HCT116 (cell line): ENCODE measurements at regions of chr20 and their contacts with region 1.

Region 1: GRCh38 chr20:35604449-35604747 is 11.2 kb upstream of the SPAG4 start:
- DNase-seq: no peak
- ATAC-seq: peak; percentile 73
- H3K4me3 ChIP-seq: no peak overlapping the region
- H3K27ac ChIP-seq: no peak overlapping the region
- H3K4me1 ChIP-seq: peaks cover 24 to 34% of the 10 kb centered on the region in 2 experiments
- H3K27me3 ChIP-seq: no peaks in the 10 kb centered on the region
- CTCF ChIP-seq: peak in 2 of 3 experiments; percentile 62 to 70; a peak in 4 of 6 replicates
- POLR2A ChIP-seq: no peak
- RAD21 ChIP-seq: peak; percentile 41

Region 2: DNA sequence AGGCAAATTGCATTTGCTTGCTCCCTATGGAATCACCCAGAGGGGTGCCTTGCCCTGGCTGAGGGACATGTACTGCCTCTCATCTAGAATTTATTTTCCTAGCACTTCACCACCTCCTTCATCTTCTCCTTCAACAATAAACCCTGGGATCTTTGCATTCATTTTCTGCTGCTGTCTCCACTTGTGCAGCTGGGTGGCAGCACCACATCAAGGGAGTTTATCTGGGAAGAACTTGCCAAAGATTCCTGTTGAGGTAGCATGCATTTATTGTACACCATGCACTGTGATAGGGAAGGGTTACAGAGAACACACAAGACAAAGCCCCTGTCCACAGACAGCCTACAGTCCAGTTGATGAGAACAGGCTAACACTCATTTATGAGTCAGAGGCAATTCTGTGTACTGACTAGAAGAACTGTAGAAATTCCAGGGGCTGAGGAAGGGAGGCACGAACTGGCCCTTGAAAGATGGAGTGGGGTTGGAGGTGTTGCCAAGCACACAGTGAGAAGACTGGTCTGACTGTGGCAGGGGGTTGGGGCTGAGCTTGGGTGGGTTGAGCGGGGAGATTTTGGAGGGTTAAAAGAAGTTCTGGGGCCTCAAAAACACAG is 92.5 kb before region 1 on chr20:
- CTCF ChIA-PET with region 1: no interaction called
- POLR2A ChIA-PET with region 1: no interaction called
- RAD21 ChIA-PET with region 1: no interaction called
- intact Hi-C with region 1: loop called (anchors 2 kb)
- DNase-seq: no peak
- ATAC-seq: peak; percentile 35; the same call in 1 of the 2 replicates
- H3K4me3 ChIP-seq: no peak overlapping the region
- H3K27ac ChIP-seq: no peak overlapping the region
- H3K4me1 ChIP-seq: peaks cover 13 to 17% of the 10 kb centered on the region in 2 experiments
- H3K27me3 ChIP-seq: no peaks in the 10 kb centered on the region
- CTCF ChIP-seq: peak; percentile 67 to 85 (median 73); a peak in 5 of 6 replicates
- POLR2A ChIP-seq: no peak
- RAD21 ChIP-seq: peak; percentile 91

Region 3: GRCh38 chr20:35547329-35547728 is 57.1 kb before region 1 on chr20:
- CTCF ChIA-PET with region 1: no interaction called
- POLR2A ChIA-PET with region 1: no interaction called
- RAD21 ChIA-PET with region 1: interaction called in 1 of 2 experiments, 3 read pairs
- intact Hi-C with region 1: loop called (anchors 5 kb)
- DNase-seq: no peak
- ATAC-seq: no peak
- H3K4me3 ChIP-seq: no peak overlapping the region
- H3K27ac ChIP-seq: no peak overlapping the region
- H3K4me1 ChIP-seq: peaks cover 5 to 15% of the 10 kb centered on the region in 2 experiments; a peak in 3 of 4 replicates
- H3K27me3 ChIP-seq: no peaks in the 10 kb centered on the region
- CTCF ChIP-seq: no peak
- POLR2A ChIP-seq: no peak
- RAD21 ChIP-seq: no peak

Region 4: DNA sequence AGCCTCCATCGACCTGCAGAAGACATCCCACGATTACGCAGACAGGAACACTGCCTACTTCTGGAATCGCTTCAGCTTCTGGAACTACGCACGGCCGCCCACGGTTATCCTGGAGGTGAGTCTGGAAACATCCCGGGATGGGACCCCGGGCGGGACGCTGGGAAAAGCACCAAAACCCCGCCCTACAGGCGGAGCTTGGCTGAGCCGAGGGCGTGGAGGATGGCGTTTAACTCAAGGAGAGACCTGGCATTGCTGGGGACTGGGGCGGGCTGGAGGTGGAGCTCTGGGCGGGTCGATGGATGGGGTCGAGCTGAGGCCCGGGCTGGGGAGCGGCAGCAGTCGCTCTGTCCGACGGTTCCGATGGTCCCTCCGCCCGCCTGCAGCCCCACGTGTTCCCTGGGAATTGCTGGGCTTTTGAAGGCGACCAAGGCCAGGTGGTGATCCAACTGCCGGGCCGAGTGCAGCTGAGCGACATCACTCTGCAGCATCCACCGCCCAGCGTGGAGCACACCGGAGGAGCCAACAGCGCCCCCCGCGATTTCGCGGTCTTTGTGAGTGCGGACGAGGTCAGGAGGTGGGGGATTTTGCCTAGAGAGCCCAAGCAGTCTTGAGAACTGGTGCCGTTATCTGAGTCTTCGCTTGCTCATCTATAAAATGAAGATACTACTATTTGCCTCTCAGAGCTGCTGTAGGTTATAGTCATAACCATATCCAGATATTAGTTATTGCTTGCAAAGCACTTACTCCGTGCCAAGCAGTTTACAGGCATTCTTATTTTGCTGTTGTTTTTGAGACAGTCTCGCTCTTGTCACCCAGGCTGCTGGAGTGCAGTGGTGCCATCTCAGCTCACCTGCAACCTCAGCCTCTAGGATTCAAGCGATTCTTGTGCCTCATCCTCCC is 15.0 kb after region 1 on chr20:
- CTCF ChIA-PET with region 1: interaction called, 10 read pairs
- POLR2A ChIA-PET with region 1: interaction called, 4 read pairs
- RAD21 ChIA-PET with region 1: no interaction called
- intact Hi-C with region 1: no loop called
- DNase-seq: peak; percentile 76
- ATAC-seq: peak; percentile 71
- H3K4me3 ChIP-seq: peak overlapping the region; percentile 63 to 70
- H3K27ac ChIP-seq: peak overlapping the region; percentile 23
- H3K4me1 ChIP-seq: peaks cover 19 to 42% of the 10 kb centered on the region in 2 experiments
- H3K27me3 ChIP-seq: no peaks in the 10 kb centered on the region
- CTCF ChIP-seq: peak in 2 of 3 experiments; percentile 67; a peak in 4 of 6 replicates
- POLR2A ChIP-seq: no peak
- RAD21 ChIP-seq: no peak

Region 5: GRCh38 chr20:35907017-35907701 is 302.8 kb after region 1 on chr20:
- CTCF ChIA-PET with region 1: no interaction called
- POLR2A ChIA-PET with region 1: no interaction called
- RAD21 ChIA-PET with region 1: no interaction called
- intact Hi-C with region 1: no loop called
- DNase-seq: no peak
- ATAC-seq: no peak
- H3K4me3 ChIP-seq: no peak overlapping the region
- H3K27ac ChIP-seq: no peak overlapping the region
- H3K4me1 ChIP-seq: peaks cover 0 to 6% of the 10 kb centered on the region in 2 experiments; a peak in 2 of 4 replicates
- H3K27me3 ChIP-seq: no peaks in the 10 kb centered on the region
- CTCF ChIP-seq: no peak
- POLR2A ChIP-seq: no peak
- RAD21 ChIP-seq: no peak

Region 6: GRCh38 chr20:36344517-36345136 is 740.2 kb after region 1 on chr20:
- CTCF ChIA-PET with region 1: no interaction called
- POLR2A ChIA-PET with region 1: no interaction called
- RAD21 ChIA-PET with region 1: no interaction called
- intact Hi-C with region 1: no loop called
- DNase-seq: peak; percentile 13
- ATAC-seq: peak; percentile 63; the same call in 1 of the 2 replicates
- H3K4me3 ChIP-seq: no peak overlapping the region
- H3K27ac ChIP-seq: no peak overlapping the region
- H3K4me1 ChIP-seq: no peaks in the 10 kb centered on the region
- H3K27me3 ChIP-seq: no peaks in the 10 kb centered on the region
- CTCF ChIP-seq: no peak
- POLR2A ChIP-seq: no peak
- RAD21 ChIP-seq: no peak